Activated T-helper 1 cell treated with anti-CD3 and anti-CD28 coated beads, Interleukin-12 subunit alpha, Interleukin-12 subunit beta, Interleukin-2, Interleukin-4 antibody, amounts not matched to agents 30 ng/mL and 10 ng/mL and 1 ng/mL, durations not matched to agents 14 hours and 24 hours and 36 hours (primary cell): ENCODE measurements at regions of chr3 and their contacts with region 1.

Region 1: DNA sequence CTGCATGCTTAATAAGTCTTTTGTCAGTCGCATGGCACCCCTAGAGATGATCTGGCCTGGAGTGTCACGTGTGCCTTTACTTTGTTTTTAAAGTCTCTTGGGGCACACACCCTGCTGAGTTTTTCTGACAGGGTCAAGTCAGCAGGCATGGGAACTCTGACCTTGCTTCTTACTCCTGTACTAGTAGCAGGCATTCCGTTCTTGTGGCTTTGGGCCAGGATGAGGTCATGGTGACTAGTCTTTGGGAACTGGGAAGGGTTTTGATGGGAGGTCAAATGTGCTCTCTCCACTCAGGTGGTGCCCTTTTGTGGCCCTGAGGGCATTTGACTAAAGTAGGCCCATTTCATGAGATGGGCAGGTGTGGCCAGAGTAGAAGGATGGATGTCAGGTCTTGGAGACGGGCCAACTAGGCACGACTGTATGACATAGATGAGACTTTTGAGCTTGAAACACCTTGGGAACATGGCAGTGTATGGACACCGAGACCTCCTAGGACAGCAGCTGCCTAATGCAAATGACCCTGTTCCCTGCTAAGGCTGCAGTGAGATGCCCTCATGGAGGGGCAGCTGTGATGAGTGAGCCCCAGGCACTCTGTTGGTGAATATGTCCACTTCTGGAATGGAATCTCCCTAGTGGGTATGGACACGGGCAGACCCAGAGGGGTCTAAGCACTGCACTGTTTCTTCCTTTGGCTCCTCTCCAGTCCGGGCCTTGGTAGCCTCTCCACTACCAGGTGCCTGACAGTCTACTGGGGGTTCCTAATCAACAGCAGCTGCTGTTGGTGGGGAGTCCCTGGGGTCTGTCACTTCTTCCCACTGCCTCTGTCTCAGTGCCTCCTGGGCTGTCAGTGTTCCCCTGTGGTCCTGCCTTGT is 16.4 kb downstream of the SRPRB start:
- DNase-seq: no peak
- H3K4me3 Mint-ChIP-seq: no peak overlapping the region
- H3K27ac Mint-ChIP-seq: no peak overlapping the region
- H3K4me1 Mint-ChIP-seq: no peaks in the 10 kb centered on the region
- H3K27me3 Mint-ChIP-seq: no peaks in the 10 kb centered on the region

Region 2: GRCh38 chr3:133633439-133633838 is 188.6 kb before region 1 on chr3:
- intact Hi-C with region 1: no loop called
- DNase-seq: no peak
- H3K4me3 Mint-ChIP-seq: no peak overlapping the region
- H3K27ac Mint-ChIP-seq: no peak overlapping the region
- H3K4me1 Mint-ChIP-seq: peaks cover 9% of the 10 kb centered on the region
- H3K27me3 Mint-ChIP-seq: no peaks in the 10 kb centered on the region

Region 3: GRCh38 chr3:133756716-133757694 is 65.0 kb before region 1 on chr3:
- intact Hi-C with region 1: no loop called
- DNase-seq: no peak
- H3K4me3 Mint-ChIP-seq: no peak overlapping the region
- H3K27ac Mint-ChIP-seq: no peak overlapping the region
- H3K4me1 Mint-ChIP-seq: no peaks in the 10 kb centered on the region
- H3K27me3 Mint-ChIP-seq: peaks cover 3% of the 10 kb centered on the region

Region 4: DNA sequence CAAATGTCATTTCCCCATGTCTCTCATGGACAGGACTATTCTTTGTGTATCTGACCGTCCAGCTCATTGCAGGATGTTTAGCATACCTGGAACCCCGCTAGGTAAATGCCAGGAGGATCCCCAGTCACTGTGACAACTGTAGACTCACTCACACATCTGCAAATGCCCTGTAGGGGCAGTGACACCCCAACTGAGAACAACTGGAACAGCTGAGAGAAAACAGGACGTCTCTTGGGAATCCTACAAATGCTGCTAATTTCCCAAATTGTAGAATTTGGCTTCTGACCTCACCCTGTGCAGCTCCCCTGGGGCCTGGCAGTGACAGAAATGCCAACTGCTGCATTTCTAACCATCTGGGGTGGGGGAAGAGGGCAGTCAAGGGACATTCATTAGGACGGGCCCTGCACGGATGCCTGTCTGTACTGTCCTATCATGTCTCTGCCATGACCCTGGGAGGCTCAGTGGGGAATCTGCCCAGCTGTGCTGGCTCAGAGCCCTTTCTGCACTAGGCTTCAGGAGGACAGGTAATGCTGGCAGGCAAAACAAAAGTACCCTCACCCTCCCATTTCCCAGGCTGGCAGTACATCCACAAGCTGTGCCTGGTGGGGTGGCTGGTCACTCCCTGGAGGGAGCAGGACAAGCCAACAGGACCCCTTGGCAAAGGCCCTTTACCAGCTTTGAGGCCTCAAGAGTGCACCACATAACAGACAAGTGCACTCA is 43.3 kb after region 1 on chr3:
- intact Hi-C with region 1: no loop called
- DNase-seq: no peak
- H3K4me3 Mint-ChIP-seq: no peak overlapping the region
- H3K27ac Mint-ChIP-seq: no peak overlapping the region
- H3K4me1 Mint-ChIP-seq: no peaks in the 10 kb centered on the region
- H3K27me3 Mint-ChIP-seq: peaks cover 9% of the 10 kb centered on the region

Region 5: DNA sequence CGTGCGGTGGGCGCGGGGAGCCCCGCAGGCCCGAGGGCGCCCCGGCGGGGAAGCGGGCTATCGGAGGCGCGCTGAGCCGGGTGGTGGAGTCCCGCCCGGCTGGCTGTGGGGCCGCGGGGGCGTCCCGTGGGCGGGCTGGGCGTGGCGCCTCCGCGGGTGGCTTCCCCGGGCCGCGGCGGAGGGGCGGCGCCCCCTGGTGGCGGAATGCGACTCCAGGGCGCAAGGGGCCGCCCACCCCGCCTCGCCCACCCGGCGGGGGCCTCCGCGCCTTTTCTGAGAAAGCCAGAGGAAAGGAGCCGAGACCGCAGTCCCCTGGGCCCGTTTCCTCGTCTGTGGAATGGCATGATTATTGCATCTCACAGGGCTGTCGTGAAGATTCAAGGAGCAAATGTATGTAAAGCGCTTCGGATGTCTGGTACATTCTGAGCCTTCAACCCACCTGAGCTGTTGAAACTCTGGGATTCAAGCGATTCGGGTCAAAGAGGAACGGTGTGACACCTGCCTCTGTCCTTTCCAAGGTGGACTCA is 105.6 kb after region 1 on chr3:
- intact Hi-C with region 1: loop called (anchors 1 kb)
- DNase-seq: peak; percentile 61
- H3K4me3 Mint-ChIP-seq: peak overlapping the region; percentile 46
- H3K27ac Mint-ChIP-seq: no peak overlapping the region
- H3K4me1 Mint-ChIP-seq: peaks cover 5% of the 10 kb centered on the region
- H3K27me3 Mint-ChIP-seq: peaks cover 30% of the 10 kb centered on the region